Gastrocnemius medialis (tissue), 4 donors: ENCODE measurements at regions of chr6 and their contacts with region 1.

Region 1: DNA sequence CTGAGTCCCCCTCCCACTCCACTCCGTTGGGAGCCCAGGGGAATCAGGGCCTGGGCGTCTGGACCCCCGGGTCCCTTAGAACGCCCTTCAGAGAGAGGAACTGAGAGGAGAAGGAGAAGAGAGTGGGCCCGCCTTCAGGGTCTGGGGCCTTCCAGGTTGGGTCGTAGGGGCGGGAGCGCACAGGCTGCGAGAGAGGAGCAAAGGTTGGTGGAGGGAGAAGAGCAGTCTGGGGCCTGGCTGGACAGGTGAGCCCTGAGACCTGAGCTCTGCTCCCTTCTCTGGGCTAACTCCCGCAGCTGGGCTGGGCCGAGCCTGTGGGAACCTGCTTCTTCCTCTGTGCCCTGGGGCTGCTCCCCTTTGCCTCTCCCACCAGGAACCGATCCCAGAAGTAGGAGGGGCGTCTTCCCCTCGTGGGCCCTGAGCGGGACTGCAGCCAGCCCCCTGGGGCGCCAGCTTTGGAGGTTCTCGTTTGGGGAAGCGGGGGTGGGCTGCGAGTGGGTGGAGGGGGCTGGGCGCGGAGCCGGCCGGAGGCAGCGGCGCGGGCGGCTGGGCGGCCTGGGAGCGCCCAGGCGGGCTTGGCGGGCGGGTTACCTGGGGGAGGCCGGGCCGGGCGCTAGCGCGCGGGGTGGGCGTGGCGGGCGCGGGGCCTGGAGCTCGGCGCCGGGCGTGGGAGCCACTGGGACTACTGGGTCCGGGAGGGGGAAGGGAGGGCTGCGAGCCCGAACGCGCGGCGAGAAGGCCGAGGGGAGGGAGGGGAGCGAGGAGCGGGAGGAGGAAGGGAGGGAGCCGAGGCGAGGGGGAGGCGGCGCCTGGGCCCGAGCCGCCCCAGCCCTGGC is at the start of gene DDR1:
- DNase-seq: peak; percentile 65 to 89
- ATAC-seq: peak; percentile 6 to 45
- H3K4me3 ChIP-seq: peak within 1 kb of the TSS; percentile 66 to 92 (median 78)
- H3K27ac ChIP-seq: peak within 1 kb of the TSS; percentile 89 to 97 (median 94)
- H3K4me1 ChIP-seq: peaks cover 56 to 63% of the 10 kb centered on the region in 2 donors
- H3K27me3 ChIP-seq: no peaks in the 10 kb centered on the region
- CTCF ChIP-seq: no peak
- POLR2A ChIP-seq: no peak
- total RNA-seq, gene DDR1: 20.0 to 62.2 (median 59.3) TPM

Region 2: DNA sequence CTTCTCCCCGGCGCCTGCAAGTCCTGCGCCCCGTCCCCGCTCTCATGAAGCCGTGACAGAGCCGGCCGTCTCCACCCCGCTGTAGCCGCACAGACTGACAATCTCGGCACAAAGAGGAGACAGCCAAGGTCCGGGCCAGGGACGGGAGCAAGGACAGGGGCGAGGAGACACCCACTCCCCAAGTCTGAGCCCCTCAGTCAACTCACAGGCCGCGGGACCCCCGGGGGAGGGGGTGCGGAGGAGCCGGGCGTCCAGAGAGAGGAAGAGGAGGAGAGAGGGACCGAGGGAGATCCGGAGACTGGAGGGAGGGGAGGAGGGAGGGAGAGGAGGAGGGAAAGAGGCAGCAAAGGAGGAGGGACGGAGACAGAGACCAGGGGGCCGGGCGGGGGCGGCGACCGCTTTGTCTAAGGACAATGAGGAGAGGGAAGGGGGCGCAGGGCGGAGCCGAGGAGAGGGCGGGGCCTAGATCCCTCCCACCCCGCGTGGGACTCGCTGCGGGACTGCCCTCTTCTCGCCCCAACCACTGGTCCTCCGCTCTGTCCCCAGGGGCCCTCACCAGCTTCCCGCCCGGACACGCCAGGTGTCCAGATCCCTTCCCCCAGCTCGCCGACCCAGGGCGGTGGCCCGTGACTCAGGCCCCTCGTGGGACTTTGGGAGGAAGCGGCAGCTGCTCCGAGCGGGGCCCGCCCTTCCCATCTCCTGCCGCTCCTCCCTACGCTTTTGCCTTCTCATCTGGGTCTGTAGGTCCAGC is 196.8 kb before region 1 on chr6:
- in situ Hi-C with region 1: no loop called
- intact Hi-C with region 1: loop called (anchors 5 kb)
- DNase-seq: peak; percentile 89 to 94
- ATAC-seq: peak; percentile 47 to 60
- H3K4me3 ChIP-seq: peak overlapping the region; percentile 67 to 97 (median 96)
- H3K27ac ChIP-seq: peak overlapping the region; percentile 93 to 99 (median 97)
- H3K4me1 ChIP-seq: peaks cover 39 to 40% of the 10 kb centered on the region in 2 donors
- H3K27me3 ChIP-seq: peaks cover 0 to 2% (median 0%) of the 10 kb centered on the region in 3 donors
- CTCF ChIP-seq: no peak
- POLR2A ChIP-seq: peak; percentile 66 to 70

Region 3: GRCh38 chr6:30907758-30908591 is 24.1 kb after region 1 on chr6 and contains the start of gene GTF2H4:
- in situ Hi-C with region 1: no loop called
- intact Hi-C with region 1: loop called (anchors 1 kb)
- DNase-seq: peak; percentile 94 to 97
- ATAC-seq: peak; percentile 99 to 100
- H3K4me3 ChIP-seq: peak within 1 kb of the TSS; percentile 87 to 98 (median 94)
- H3K27ac ChIP-seq: peak within 1 kb of the TSS; percentile 72 to 88 (median 81)
- H3K4me1 ChIP-seq: peaks cover 10 to 15% of the 10 kb centered on the region in 2 donors
- H3K27me3 ChIP-seq: no peaks in the 10 kb centered on the region
- CTCF ChIP-seq: peak in 1 of 5 experiments; percentile 7
- POLR2A ChIP-seq: peak in 1 of 2 donors; percentile 45
- total RNA-seq, gene GTF2H4: 5.7 to 20.7 (median 7.5) TPM